Posterior vena cava (tissue), 2 donors: ENCODE measurements at regions of chr1 and their contacts with region 1.

Region 1: DNA sequence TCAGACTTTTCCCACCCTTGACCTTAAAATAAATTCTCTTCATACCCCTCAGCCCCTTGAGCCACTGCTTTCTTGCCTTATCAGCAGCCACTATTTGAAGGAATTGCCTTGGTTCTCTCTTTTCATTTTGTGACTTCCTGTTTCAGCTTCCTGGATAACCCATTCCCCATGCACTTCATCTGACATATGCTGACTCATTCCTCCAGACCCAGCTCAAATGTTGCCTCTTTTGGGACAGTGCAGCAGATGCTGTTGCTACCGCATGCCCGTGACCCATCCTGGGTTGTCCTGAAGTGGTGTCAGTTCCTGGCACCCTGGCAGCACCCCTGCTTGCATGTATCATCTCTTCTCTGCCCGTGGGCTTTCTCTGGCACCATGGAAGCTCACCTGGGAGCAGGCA is 496.1 kb downstream of the PTPRU start:
- DNase-seq: no peak

Region 2: DNA sequence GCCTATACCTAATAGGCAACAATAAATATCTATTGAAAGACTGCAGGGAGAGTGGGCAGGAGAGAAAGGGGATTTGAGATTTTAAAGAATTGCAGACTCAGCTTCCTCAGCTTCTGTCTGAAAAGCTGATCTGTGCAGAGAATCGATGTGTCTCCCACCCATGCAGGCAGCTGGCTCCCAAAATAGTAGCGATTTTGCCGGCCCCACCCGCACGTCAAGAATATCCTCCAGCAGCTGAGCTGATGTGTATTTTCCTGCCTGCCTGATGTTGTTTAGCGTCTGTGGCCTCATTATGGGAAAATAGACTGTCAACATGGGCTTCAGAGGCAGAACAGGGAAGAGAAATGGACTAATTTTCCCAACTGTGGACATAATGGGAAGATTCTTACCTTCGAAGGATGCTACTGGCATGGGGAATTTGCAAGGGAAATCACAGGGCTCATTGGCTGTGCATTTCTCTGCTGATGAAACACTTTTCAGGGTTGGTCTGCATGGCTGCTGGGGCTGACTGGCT is 203.6 kb after region 1 on chr1:
- intact Hi-C with region 1: loop called in 1 of 2 experiments (anchors 2 kb)
- DNase-seq: no peak

Region 3: DNA sequence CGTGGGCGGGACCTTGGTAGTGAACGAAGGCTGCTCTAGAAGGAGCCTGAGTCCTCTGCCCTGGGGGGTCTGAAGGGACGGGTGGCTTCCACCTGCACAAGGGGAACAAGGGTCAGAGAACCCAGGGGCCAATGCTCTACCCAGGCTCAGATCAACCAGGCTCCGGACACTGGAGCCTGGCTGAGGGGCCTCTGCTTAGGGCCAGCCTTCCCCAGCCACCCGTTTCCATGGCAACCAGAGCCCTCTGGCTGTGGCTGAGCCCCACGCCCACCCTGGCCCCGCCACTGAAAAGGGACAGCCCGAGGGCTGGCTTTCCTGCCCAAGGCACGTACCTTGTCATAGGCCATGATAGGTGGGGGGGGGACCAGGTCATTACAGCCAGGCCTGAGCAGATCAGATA is 228.4 kb after region 1 on chr1:
- intact Hi-C with region 1: no loop called
- DNase-seq: no peak

Region 4: DNA sequence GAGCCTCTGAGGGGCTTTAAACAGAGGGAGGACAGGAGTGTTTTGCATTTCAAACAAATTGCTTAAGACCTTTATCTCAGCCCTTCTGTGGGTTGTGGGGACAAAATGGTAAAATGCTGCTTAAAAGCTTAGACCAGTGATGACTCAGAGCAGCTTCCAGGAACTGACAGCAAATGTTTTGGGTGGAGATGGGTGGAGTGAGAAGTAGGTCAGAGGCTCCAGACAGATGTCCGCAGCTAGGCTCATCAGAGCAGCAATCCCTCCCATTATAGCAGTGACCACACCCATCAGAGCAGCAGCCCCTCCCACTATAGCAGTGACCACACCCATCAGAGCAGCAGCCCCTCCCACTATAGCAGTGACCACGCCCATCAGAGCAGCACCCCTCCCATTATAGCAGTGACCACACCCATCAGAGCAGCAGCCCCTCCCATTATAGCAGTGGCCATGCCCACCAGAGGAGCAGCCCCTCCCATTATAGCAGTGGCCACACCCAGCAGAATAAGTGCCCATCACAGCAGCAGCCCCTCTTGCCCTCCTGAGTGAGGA is 458.8 kb after region 1 on chr1:
- intact Hi-C with region 1: no loop called
- DNase-seq: peak; percentile 82